ENCODE measurements at regions of chr4 and their contacts with region 1.

Region 1: DNA sequence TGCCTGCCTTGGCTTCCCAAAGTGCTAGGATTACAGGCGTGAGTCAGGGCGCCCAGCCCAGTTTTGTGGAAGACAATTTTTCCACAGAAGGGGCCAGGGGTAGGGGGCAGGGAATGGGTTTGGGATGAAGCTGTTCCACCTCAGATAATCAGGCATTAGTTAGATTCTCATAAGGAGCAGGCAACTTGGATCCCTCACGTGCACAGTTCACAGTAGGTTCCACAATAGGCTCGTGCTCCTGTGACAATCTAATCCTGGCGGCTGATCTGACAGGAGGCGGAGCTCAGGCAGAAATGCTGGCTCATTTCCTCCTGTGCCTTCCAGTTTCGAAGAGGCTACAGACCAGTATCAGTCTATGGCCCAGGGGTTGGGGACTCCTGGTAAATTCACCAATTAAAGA is 491.6 kb upstream of the AADAT start:
- DNase-seq: no peak
- H3K4me3 ChIP-seq: no peak overlapping the region
- H3K27ac ChIP-seq: no peak overlapping the region
- H3K4me1 ChIP-seq: no peaks in the 10 kb centered on the region
- H3K27me3 ChIP-seq: no peaks in the 10 kb centered on the region
- CTCF ChIP-seq: no peak
- EP300 ChIP-seq: no peak
- POLR2A ChIP-seq: no peak

Region 2: DNA sequence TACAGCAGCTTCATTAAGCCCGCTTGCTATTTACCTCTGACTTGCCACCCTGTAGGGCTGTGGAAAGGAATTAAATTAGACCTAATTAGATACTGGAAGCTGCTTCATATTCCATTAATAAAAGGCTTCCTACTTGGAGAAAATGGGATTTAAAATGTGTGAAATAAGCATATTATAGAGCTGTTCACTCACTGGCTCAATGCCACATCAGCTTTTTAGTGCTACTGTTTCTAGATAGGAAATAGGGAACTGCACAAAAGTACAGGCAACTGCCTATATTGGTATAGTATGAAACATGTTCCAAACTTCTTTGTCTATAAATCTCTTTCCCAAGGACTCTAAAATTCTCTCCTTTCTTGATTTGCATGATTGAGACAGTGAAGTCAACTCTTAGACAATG is 83.6 kb before region 1 on chr4:
- in situ Hi-C with region 1: no loop called
- intact Hi-C with region 1: loop called (anchors 2 kb)
- DNase-seq: no peak
- H3K4me3 ChIP-seq: no peak overlapping the region
- H3K27ac ChIP-seq: no peak overlapping the region
- H3K4me1 ChIP-seq: no peaks in the 10 kb centered on the region
- H3K27me3 ChIP-seq: no peaks in the 10 kb centered on the region
- CTCF ChIP-seq: no peak
- EP300 ChIP-seq: no peak
- POLR2A ChIP-seq: no peak

Measured in transverse colon (tissue), 4 donors.